Naive thymus-derived CD4-positive, alpha-beta T cell (primary cell): ENCODE measurements at regions of chr2 and their contacts with region 1.

Region 1: GRCh38 chr2:37925063-37925897 is at the start of gene RMDN2:
- DNase-seq: peak; percentile 57 to 78 (median 71)
- ATAC-seq: peak; percentile 88
- H3K4me3 ChIP-seq: peak within 1 kb of the TSS; percentile 81
- H3K4me3 Mint-ChIP-seq: peak within 1 kb of the TSS; percentile 89 to 100 (median 98)
- H3K27ac ChIP-seq: peak within 1 kb of the TSS; percentile 73
- H3K27ac Mint-ChIP-seq: peak within 1 kb of the TSS; percentile 67 to 100 (median 96)
- H3K4me1 ChIP-seq: peaks cover 0 to 8% of the 10 kb centered on the region in 2 donors
- H3K4me1 Mint-ChIP-seq: peaks cover 8 to 50% (median 24%) of the 10 kb centered on the region in 7 donors
- H3K27me3 ChIP-seq: no peaks in the 10 kb centered on the region
- H3K27me3 Mint-ChIP-seq: peaks cover 0 to 60% (median 0%) of the 10 kb centered on the region in 5 donors
- total RNA-seq, gene RMDN2: 0.39 to 8.1 (median 5.1) TPM

Region 2: DNA sequence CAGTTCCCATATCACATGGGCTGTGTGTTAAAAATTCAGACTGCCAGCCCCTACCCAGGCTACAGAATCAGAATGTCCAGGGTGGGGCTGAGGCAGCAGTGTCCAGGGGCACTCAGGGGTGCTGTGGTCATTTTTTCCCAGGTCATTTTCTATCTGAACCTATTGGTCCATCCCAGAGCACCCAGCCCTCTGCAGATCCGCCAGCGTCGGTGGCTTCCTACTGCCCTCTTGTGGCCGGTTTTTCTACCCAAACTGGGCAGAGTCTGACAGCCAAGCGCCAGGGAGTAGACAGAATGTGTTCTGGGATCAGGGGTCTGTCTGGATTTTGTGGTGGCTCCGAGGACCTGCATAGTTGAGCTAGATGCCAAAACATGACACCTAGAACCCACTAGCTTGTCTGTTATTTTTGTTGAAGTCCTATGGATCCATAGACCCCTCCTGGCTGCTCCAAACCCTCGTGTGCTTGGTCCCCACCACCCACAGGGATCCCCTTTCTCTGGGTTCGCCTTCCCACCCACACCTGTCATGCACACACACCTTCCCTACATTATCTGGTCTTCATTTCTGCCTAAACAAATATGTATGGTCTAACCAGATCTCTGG is 34.3 kb before region 1 on chr2:
- CTCF ChIA-PET with region 1: interaction called, 11 read pairs
- POLR2A ChIA-PET with region 1: no interaction called
- intact Hi-C with region 1: loop called in 1 of 2 experiments (anchors 1 kb)
- DNase-seq: peak; percentile 17 to 63 (median 44)
- ATAC-seq: peak; percentile 72
- H3K4me3 ChIP-seq: no peak overlapping the region
- H3K4me3 Mint-ChIP-seq: peak overlapping the region in 6 of 10 donors; percentile 12 to 75 (median 55)
- H3K27ac ChIP-seq: no peak overlapping the region
- H3K27ac Mint-ChIP-seq: peak overlapping the region in 2 of 9 donors; percentile 35 to 71
- H3K4me1 ChIP-seq: peaks cover 25 to 33% of the 10 kb centered on the region in 2 donors
- H3K4me1 Mint-ChIP-seq: peaks cover 24 to 58% (median 45%) of the 10 kb centered on the region in 7 donors
- H3K27me3 ChIP-seq: no peaks in the 10 kb centered on the region
- H3K27me3 Mint-ChIP-seq: peaks cover 0 to 29% (median 2%) of the 10 kb centered on the region in 5 donors

Region 3: DNA sequence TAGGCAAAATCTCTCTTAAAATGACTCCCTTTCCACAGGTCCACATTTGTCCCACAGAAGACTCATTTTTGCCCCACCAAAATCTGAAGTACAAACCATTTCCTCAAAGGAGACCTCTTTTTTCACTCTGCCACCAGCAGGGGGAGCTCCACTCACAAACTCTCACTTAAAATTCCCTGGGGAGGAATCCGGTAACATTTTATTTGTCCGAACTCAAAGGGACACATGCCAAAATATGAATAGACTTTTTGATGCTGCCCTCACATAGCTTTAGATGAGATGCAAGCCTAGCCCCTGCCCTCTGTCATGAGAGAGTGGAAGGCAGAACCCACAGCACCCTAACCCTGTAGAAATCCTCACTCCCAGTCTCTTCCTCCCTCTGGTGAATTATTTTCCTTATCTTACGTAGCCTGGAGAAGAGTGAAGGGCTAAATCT is 56.9 kb after region 1 on chr2:
- CTCF ChIA-PET with region 1: no interaction called
- POLR2A ChIA-PET with region 1: no interaction called
- intact Hi-C with region 1: loop called in 1 of 2 experiments (anchors 5 kb)
- DNase-seq: peak in 7 of 9 donors; percentile 33 to 61 (median 39)
- ATAC-seq: peak; percentile 52
- H3K4me3 ChIP-seq: no peak overlapping the region
- H3K4me3 Mint-ChIP-seq: peak overlapping the region in 1 of 10 donors; percentile 14
- H3K27ac ChIP-seq: no peak overlapping the region
- H3K27ac Mint-ChIP-seq: no peak overlapping the region
- H3K4me1 ChIP-seq: no peaks in the 10 kb centered on the region
- H3K4me1 Mint-ChIP-seq: peaks cover 0 to 8% (median 6%) of the 10 kb centered on the region in 7 donors
- H3K27me3 ChIP-seq: no peaks in the 10 kb centered on the region
- H3K27me3 Mint-ChIP-seq: peaks cover 0 to 14% (median 0%) of the 10 kb centered on the region in 5 donors

Region 4: DNA sequence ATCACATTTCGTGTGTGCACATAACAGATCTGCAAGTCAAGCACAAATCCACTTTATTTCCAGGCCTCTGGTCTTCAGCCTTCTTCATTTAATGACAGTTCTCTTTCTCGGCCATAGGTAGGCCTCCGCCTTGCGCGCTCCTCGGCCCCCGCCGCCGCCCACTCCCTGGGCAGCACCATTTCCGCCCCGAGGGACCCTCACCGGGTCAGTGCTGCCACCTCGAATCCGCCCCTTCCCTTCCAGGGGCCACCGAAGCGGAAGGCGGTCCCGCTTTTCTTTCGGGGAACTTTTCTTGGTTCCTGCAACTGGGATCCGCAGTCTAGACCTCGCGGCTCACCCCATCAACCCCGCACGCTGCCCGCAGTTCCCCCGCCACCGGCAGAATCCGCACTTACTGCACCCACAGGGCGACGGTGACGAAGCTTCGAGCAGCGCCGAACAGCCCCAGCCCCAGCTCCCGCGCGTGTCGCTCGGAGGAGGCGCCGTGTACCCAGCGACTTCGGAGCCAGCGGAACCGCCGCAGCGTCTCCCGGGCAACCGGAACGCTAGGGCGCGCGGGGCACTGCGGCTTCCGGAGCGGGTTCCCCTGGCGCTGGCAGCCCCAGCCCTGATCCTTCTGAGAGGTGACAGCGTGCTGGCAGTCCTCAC is 1318.3 kb after region 1 on chr2 and contains the start of gene CDKL4:
- CTCF ChIA-PET with region 1: no interaction called
- POLR2A ChIA-PET with region 1: no interaction called
- intact Hi-C with region 1: no loop called
- DNase-seq: peak in 7 of 9 donors; percentile 24 to 56 (median 43)
- ATAC-seq: peak; percentile 75
- H3K4me3 ChIP-seq: peak within 1 kb of the TSS; percentile 56
- H3K4me3 Mint-ChIP-seq: peak within 1 kb of the TSS; percentile 80 to 92 (median 87)
- H3K27ac ChIP-seq: no peak within 1 kb of the TSS
- H3K27ac Mint-ChIP-seq: peak within 1 kb of the TSS in 8 of 9 donors; percentile 50 to 88 (median 70)
- H3K4me1 ChIP-seq: no peaks in the 10 kb centered on the region
- H3K4me1 Mint-ChIP-seq: peaks cover 0 to 31% (median 21%) of the 10 kb centered on the region in 7 donors
- H3K27me3 ChIP-seq: no peaks in the 10 kb centered on the region
- H3K27me3 Mint-ChIP-seq: no peaks in the 10 kb centered on the region
- total RNA-seq, gene CDKL4: 0.82 TPM in 1 of 5 experiments, not detected in the others